ENCODE measurements at regions of chr16 and their contacts with region 1.

Region 1: DNA sequence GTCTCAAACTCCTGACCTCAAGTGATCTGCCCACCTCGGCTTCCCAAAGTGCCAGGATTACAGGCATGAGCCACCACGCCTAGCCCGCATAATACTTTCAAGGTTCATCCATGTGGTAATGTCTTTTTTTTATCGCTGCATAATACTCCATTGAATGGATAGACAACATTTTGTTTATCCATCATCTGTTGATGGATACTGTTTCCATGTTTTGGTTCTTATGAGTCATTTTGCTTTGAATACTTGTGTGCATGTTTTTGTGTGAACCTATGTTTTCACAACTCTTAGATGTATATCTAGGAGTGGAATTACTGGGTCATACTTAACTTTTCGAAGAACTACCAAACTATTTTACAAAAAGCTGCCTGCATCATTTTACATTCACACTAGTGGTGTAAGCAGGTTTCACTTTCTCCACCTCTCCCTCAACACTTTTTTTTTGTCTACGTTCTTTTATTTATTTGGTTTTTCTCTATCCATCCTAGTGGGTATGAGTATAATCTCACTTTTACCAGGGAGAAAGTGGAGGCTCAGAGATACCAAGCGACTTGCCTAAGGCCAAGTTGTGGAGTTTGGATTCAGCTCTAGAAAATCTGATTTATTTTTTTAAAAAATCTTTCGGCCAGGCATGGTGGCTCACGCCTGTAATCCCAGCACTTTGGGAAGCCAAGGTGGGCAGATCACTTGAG is 151.1 kb downstream of the CMIP start:
- DNase-seq: no peak
- H3K4me3 ChIP-seq: no peak overlapping the region
- H3K27ac ChIP-seq: no peak overlapping the region
- H3K4me1 ChIP-seq: peaks cover 5 to 11% of the 10 kb centered on the region in 2 donors
- H3K27me3 ChIP-seq: no peaks in the 10 kb centered on the region
- CTCF ChIP-seq: no peak
- POLR2A ChIP-seq: no peak

Region 2: DNA sequence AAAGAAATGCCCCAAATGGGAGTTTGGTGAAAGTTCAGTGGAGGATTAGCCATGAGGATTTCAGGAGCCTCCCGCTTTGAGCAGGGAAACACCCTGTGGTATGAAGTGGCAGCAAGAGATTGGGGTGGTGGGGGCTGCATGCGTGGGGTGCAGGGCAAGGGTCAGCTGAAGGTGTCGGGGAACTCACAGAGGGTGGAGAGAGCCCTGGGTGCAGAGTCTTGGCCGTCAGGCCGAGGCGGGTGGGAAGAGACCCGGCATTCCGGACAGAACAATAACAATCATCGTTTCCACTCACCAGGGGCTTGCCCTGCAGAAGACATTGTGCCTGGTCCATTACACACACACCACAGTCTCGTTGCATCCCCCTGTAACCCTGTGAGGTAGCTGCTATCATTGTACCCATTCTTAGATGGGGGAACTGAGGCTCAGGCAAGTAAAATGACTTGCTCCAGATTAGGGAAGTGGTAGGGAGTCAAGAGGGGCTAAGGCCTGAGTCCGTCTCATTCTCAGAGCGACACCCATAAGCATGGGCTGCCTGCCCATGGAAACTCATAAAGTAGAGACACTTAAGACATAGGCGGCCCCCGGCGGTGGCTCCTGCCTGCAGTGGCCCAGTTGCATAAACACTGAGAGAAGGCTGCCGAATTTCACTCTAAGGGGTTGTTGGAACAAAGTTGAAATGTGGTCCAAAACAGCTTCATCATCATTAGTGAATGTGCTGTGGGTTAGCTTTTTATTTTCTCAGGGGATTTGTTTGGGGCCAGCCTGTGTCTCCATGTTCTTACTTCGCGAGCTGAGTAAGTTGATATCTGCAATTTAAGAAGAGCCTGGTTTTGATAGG is 57.8 kb before region 1 on chr16:
- intact Hi-C with region 1: loop called in 1 of 2 experiments (anchors 10 kb)
- DNase-seq: no peak
- H3K4me3 ChIP-seq: no peak overlapping the region
- H3K27ac ChIP-seq: no peak overlapping the region
- H3K4me1 ChIP-seq: peaks cover 8 to 23% of the 10 kb centered on the region in 2 donors
- H3K27me3 ChIP-seq: no peaks in the 10 kb centered on the region
- CTCF ChIP-seq: no peak
- POLR2A ChIP-seq: no peak

Region 3: DNA sequence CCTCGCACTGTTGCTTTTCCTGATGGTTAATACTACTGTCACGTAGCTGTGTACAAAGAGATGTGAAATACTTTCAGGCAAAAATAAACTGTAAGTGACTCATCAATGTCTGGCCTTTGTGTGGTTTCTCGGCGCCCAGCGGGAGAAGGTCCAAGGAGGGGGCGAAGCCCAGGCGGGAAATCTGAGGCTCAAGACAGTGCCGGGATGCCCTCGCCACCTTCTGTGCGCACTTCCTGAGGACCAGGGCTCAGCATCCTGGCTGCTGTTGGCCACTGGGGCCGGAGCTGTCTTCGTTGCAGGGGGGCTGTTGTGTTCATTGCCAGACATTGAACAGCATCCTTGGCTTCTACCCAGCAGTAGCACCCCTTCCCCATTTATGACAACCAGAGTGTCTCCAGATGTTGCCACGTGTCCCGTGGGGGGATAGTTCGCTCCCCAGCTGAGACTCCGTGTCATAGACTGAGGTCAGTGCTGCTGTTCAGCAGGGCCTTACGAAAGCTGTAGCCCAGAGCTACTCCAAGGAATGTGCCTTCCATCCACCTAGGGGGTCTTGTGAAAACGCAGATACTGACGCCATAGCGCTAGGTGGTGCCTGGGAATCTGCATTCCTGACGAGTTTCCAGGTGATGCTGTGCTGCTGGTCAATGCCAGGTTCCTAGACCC is 116.0 kb after region 1 on chr16:
- intact Hi-C with region 1: no loop called
- DNase-seq: peak in 5 of 7 donors; percentile 53 to 81 (median 74)
- H3K4me3 ChIP-seq: no peak overlapping the region
- H3K27ac ChIP-seq: peak overlapping the region in 1 of 5 donors; percentile 14
- H3K4me1 ChIP-seq: peaks cover 6 to 19% of the 10 kb centered on the region in 2 donors
- H3K27me3 ChIP-seq: no peaks in the 10 kb centered on the region
- CTCF ChIP-seq: no peak
- POLR2A ChIP-seq: no peak